Naive thymus-derived CD4-positive, alpha-beta T cell (primary cell): ENCODE measurements at regions of chr12 and their contacts with region 1.

Region 1: GRCh38 chr12:15584366-15585041 is 204.7 kb downstream of the EPS8 start:
- DNase-seq: peak in 7 of 9 donors; percentile 40 to 65 (median 56)
- ATAC-seq: peak; percentile 78
- H3K4me3 ChIP-seq: no peak overlapping the region
- H3K4me3 Mint-ChIP-seq: no peak overlapping the region
- H3K27ac ChIP-seq: no peak overlapping the region
- H3K27ac Mint-ChIP-seq: no peak overlapping the region
- H3K4me1 ChIP-seq: peaks cover 0 to 4% of the 10 kb centered on the region in 2 donors
- H3K4me1 Mint-ChIP-seq: peaks cover 1 to 21% (median 15%) of the 10 kb centered on the region in 7 donors
- H3K27me3 ChIP-seq: no peaks in the 10 kb centered on the region
- H3K27me3 Mint-ChIP-seq: peaks cover 0 to 3% (median 0%) of the 10 kb centered on the region in 5 donors

Region 2: GRCh38 chr12:15151161-15152120 is 433.1 kb before region 1 on chr12:
- CTCF ChIA-PET with region 1: interaction called, 4 read pairs
- POLR2A ChIA-PET with region 1: no interaction called
- intact Hi-C with region 1: loop called in 1 of 2 experiments (anchors 1 kb)
- DNase-seq: peak in 2 of 9 donors; percentile 1
- ATAC-seq: no peak
- H3K4me3 ChIP-seq: no peak overlapping the region
- H3K4me3 Mint-ChIP-seq: no peak overlapping the region
- H3K27ac ChIP-seq: no peak overlapping the region
- H3K27ac Mint-ChIP-seq: no peak overlapping the region
- H3K4me1 ChIP-seq: no peaks in the 10 kb centered on the region
- H3K4me1 Mint-ChIP-seq: no peaks in the 10 kb centered on the region
- H3K27me3 ChIP-seq: no peaks in the 10 kb centered on the region
- H3K27me3 Mint-ChIP-seq: peaks cover 0 to 30% (median 7%) of the 10 kb centered on the region in 5 donors

Region 3: GRCh38 chr12:15268927-15269552 is 315.5 kb before region 1 on chr12:
- CTCF ChIA-PET with region 1: interaction called, 5 read pairs
- POLR2A ChIA-PET with region 1: no interaction called
- intact Hi-C with region 1: loop called in 1 of 2 experiments (anchors 2 kb)
- DNase-seq: peak in 7 of 9 donors; percentile 28 to 65 (median 56)
- ATAC-seq: peak; percentile 79
- H3K4me3 ChIP-seq: no peak overlapping the region
- H3K4me3 Mint-ChIP-seq: no peak overlapping the region
- H3K27ac ChIP-seq: no peak overlapping the region
- H3K27ac Mint-ChIP-seq: no peak overlapping the region
- H3K4me1 ChIP-seq: no peaks in the 10 kb centered on the region
- H3K4me1 Mint-ChIP-seq: no peaks in the 10 kb centered on the region
- H3K27me3 ChIP-seq: no peaks in the 10 kb centered on the region
- H3K27me3 Mint-ChIP-seq: peaks cover 2 to 11% (median 5%) of the 10 kb centered on the region in 5 donors

Region 4: GRCh38 chr12:15546102-15546701 is 38.3 kb before region 1 on chr12:
- CTCF ChIA-PET with region 1: interaction called, 8 read pairs
- POLR2A ChIA-PET with region 1: interaction called, 10 read pairs
- intact Hi-C with region 1: loop called in 1 of 2 experiments (anchors 1 kb)
- DNase-seq: peak in 7 of 9 donors; percentile 73 to 89 (median 85)
- ATAC-seq: peak; percentile 93
- H3K4me3 ChIP-seq: no peak overlapping the region
- H3K4me3 Mint-ChIP-seq: peak overlapping the region; percentile 36 to 85 (median 76)
- H3K27ac ChIP-seq: peak overlapping the region; percentile 74
- H3K27ac Mint-ChIP-seq: peak overlapping the region; percentile 95 to 100 (median 98)
- H3K4me1 ChIP-seq: peaks cover 0 to 50% of the 10 kb centered on the region in 2 donors
- H3K4me1 Mint-ChIP-seq: peaks cover 30 to 98% (median 86%) of the 10 kb centered on the region in 7 donors
- H3K27me3 ChIP-seq: peaks cover 0 to under 1% of the 10 kb centered on the region in 2 donors
- H3K27me3 Mint-ChIP-seq: no peaks in the 10 kb centered on the region

Region 5: DNA sequence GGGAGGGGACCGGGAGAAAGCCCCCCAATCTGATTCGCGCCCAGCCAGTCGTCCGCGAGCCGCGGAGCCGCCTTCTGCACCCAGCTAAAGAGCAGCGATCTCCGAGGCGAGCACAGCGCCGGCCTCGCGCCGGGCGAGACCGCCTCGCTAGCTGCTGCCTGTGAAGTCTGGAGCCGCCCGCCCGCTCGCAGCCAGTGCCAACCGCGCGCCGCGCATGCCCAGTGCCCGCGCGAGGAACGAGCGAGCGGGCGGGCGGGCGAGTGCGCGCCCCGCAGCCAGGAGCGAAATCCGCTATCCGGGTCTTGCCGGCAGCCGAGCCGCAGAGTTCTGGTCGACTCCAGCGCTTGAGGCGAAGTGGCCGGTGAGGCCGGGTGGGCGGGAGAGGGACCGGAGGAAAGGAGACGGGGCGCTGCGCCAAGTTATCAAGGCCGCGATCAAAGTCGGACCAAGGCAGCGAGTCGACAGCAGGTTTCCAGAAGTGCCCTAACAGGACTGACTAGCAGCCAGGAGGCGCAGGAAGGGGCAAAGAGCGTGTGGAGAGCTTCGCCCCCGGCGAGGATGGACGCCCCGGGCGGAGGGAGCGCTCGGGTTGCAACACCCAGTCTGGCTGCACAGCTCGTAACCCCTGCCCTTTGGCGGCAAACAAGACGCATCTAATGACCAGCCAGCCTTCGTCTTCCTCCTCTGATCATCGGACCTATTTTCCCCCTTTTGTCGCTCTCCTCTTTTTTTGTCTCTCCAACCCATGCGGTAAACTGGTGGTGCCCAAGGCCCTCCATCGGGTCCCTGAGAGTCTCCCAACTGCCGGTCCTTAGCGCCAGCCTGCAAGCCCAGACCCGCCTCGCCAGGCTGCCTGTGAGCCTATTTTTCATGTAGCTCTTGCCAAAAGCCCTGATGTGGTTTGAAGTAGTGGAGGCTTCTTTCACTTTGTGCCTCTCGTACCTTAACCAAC is 205.0 kb after region 1 on chr12 and contains the start of gene EPS8:
- CTCF ChIA-PET with region 1: interaction called, 3 read pairs
- POLR2A ChIA-PET with region 1: no interaction called
- intact Hi-C with region 1: loop called in 1 of 2 experiments (anchors 5 kb)
- DNase-seq: peak; percentile 82 to 92 (median 91)
- ATAC-seq: peak; percentile 95
- H3K4me3 ChIP-seq: peak within 1 kb of the TSS; percentile 78
- H3K4me3 Mint-ChIP-seq: peak within 1 kb of the TSS; percentile 91 to 99 (median 96)
- H3K27ac ChIP-seq: peak within 1 kb of the TSS; percentile 63
- H3K27ac Mint-ChIP-seq: peak within 1 kb of the TSS; percentile 58 to 97 (median 84)
- H3K4me1 ChIP-seq: peaks cover 0 to 7% of the 10 kb centered on the region in 2 donors
- H3K4me1 Mint-ChIP-seq: peaks cover 10 to 17% (median 15%) of the 10 kb centered on the region in 7 donors
- H3K27me3 ChIP-seq: peaks cover 0 to 11% of the 10 kb centered on the region in 2 donors
- H3K27me3 Mint-ChIP-seq: peaks cover 26 to 74% (median 49%) of the 10 kb centered on the region in 5 donors
- total RNA-seq, gene EPS8: 2.0 to 3.1 (median 2.7) TPM